ENCODE measurements at regions of chr1 and their contacts with region 1.

Region 1: GRCh38 chr1:36170643-36171412 is 14.9 kb downstream of the MAP7D1 start:
- DNase-seq: no peak
- H3K4me3 ChIP-seq: no peak overlapping the region
- H3K27ac ChIP-seq: no peak overlapping the region
- H3K4me1 ChIP-seq: peaks cover 11% of the 10 kb centered on the region
- H3K27me3 ChIP-seq: no peaks in the 10 kb centered on the region
- CTCF ChIP-seq: no peak

Region 2: GRCh38 chr1:36034692-36035091 is 136.1 kb before region 1 on chr1:
- CTCF ChIA-PET with region 1: no interaction called
- POLR2A ChIA-PET with region 1: no interaction called
- intact Hi-C with region 1: no loop called
- DNase-seq: peak; percentile 25 to 98
- H3K4me3 ChIP-seq: no peak overlapping the region; the same call in 1 of the 2 replicates
- H3K27ac ChIP-seq: peak overlapping the region; percentile 94
- H3K4me1 ChIP-seq: peaks cover 24% of the 10 kb centered on the region
- H3K27me3 ChIP-seq: no peaks in the 10 kb centered on the region
- CTCF ChIP-seq: no peak

Region 3: DNA sequence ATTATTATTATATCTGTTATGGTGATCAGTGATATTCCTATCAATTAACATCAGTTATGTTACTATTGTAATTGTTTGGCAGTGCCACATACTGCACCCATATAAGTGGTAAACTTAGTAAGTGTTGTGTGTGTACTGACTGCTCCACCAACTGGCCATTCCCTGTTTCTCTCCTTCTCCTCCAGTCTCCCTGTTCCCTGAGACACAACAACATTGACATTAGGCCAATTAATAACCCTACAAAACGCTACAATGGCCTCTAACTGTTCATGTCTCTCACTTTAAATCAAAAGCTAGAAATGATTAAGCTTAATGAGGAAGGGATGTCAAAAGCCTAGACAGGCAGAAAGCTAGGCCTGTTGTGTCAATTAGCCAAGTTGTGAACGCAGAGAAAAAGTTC is 46.8 kb after region 1 on chr1:
- CTCF ChIA-PET with region 1: interaction called, 11 read pairs
- POLR2A ChIA-PET with region 1: no interaction called
- intact Hi-C with region 1: no loop called
- DNase-seq: no peak
- H3K4me3 ChIP-seq: no peak overlapping the region
- H3K27ac ChIP-seq: no peak overlapping the region
- H3K4me1 ChIP-seq: peaks cover 3% of the 10 kb centered on the region
- H3K27me3 ChIP-seq: no peaks in the 10 kb centered on the region
- CTCF ChIP-seq: peak; percentile 37; the same call in 1 of the 2 replicates